ENCODE measurements at regions of chr2 and their contacts with region 1.

Region 1: GRCh38 chr2:208072250-208072892 is 47.0 kb upstream of the PLEKHM3 start:
- DNase-seq: peak; percentile 64

Region 2: GRCh38 chr2:207746131-207746530 is 326.2 kb before region 1 on chr2:
- in situ Hi-C with region 1: loop called (anchors 25 kb)
- DNase-seq: peak; percentile 75